Activated T-helper 2 cell treated with anti-CD3 and anti-CD28 coated beads, Interferon-gamma antibody, Interleukin-2, Interleukin-4, amounts not matched to agents 10 μg/mL and 5 μg/mL and 100 μg/mL, durations not matched to agents 14 hours and 24 hours and 36 hours (primary cell): ENCODE measurements at regions of chrX and their contacts with region 1.

Region 1: DNA sequence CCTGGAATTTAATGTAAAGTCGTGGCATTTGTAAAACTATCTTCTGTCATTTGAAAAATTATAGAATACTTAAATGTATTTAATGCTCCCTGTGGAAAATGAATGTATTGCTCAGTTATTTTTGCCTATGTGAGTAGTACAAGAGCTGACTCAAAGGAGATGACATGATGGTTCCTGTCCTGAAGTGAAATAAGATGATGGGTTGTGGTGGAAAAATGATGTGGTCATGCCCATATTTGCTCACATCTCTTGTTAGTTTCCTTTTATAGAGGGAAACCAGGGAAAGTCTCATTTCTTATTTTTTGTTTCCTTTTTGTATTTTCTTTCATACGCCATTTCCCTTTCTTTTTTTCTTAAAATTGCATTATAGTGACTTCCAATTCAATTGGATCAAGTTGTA is 23.7 kb downstream of the PLS3 start:
- DNase-seq: no peak
- H3K4me3 Mint-ChIP-seq: no peak overlapping the region
- H3K27ac Mint-ChIP-seq: peak overlapping the region; percentile 35
- H3K4me1 Mint-ChIP-seq: peaks cover 6% of the 10 kb centered on the region
- H3K27me3 Mint-ChIP-seq: no peaks in the 10 kb centered on the region

Region 2: DNA sequence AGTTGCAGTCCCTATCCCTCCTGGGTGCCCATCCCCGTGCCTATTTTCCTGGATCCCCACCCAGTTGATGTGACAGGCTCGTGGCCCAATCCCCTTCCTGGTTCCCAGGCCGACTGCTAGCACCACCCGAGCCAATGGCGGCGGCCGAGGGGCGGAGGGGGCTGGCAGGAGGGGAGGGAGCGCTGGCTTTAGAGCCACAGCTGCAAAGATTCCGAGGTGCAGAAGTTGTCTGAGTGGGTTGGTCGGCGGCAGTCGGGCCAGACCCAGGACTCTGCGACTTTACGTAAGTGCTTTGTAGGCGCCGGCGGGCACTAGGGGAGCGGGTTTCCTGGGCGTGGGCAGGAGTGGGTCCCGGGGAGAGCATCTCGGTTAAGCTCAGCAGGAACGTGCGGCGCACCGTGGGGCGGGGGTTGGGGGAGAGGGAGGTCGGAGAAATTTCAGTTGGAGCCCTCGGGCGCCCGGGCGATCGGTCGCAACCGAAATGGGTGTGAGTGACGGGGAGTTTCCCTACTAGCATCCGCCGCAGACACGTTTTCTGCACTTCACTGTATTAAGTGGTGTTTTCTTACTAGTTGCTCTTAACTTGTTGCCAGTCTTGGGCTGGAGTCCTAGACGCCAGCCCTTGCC is 23.6 kb before region 1 on chrX and contains the start of gene PLS3:
- intact Hi-C with region 1: loop called (anchors 2 kb)
- DNase-seq: peak; percentile 10
- H3K4me3 Mint-ChIP-seq: peak within 1 kb of the TSS; percentile 72
- H3K27ac Mint-ChIP-seq: no peak within 1 kb of the TSS
- H3K4me1 Mint-ChIP-seq: no peaks in the 10 kb centered on the region
- H3K27me3 Mint-ChIP-seq: peaks cover 19% of the 10 kb centered on the region
- total RNA-seq, gene PLS3: 3.1 and 5.4 TPM in 2 replicates